Calu3 (cell line): ENCODE measurements at regions of chr5 and their contacts with region 1.

Region 1: DNA sequence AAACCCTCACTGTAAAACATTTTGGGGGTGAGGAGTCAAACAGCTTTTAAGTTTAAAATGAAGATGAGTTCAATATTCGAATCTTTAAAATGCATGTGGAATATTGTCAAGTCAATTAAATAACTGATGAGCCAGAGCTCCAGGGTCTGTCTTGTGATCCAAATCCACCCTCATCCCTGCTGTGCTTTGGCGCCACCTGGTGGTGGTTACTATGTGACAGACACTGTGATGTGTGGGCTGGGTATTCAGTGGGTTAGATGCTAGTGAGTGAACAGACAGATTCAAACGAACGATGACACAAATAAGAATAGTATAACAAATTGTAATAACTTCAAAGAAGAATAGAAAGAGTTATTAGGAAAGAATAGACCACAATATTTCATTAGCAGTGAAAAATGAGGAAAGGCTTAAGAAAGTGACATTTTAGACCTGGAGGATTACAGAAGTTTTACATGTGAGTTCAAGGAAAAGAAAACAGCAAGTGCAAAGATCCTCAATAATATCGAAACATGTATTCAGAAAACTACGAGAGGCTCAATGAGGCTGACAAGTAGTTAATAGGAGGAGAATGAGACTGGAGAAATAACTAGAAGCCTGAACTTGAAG is 51.4 kb upstream of the CHSY3 start:
- DNase-seq: peak; percentile 89
- H3K4me3 Mint-ChIP-seq: no peak overlapping the region
- H3K27ac Mint-ChIP-seq: no peak overlapping the region
- H3K4me1 Mint-ChIP-seq: no peaks in the 10 kb centered on the region
- H3K27me3 Mint-ChIP-seq: no peaks in the 10 kb centered on the region
- CTCF ChIP-seq: peak; percentile 95

Region 2: GRCh38 chr5:129172580-129172979 is 680.3 kb before region 1 on chr5:
- CTCF ChIA-PET with region 1: no interaction called
- intact Hi-C with region 1: loop called (anchors 5 kb)
- DNase-seq: peak; percentile 5
- H3K4me3 Mint-ChIP-seq: no peak overlapping the region
- H3K27ac Mint-ChIP-seq: no peak overlapping the region
- H3K4me1 Mint-ChIP-seq: no peaks in the 10 kb centered on the region
- H3K27me3 Mint-ChIP-seq: no peaks in the 10 kb centered on the region
- CTCF ChIP-seq: no peak

Region 3: GRCh38 chr5:129422946-129423345 is 429.9 kb before region 1 on chr5:
- CTCF ChIA-PET with region 1: no interaction called
- intact Hi-C with region 1: no loop called
- DNase-seq: peak; percentile 6
- H3K4me3 Mint-ChIP-seq: no peak overlapping the region
- H3K27ac Mint-ChIP-seq: no peak overlapping the region
- H3K4me1 Mint-ChIP-seq: no peaks in the 10 kb centered on the region
- H3K27me3 Mint-ChIP-seq: no peaks in the 10 kb centered on the region
- CTCF ChIP-seq: no peak

Region 4: GRCh38 chr5:129664337-129664937 is 188.4 kb before region 1 on chr5:
- CTCF ChIA-PET with region 1: no interaction called
- intact Hi-C with region 1: loop called (anchors 5 kb)
- DNase-seq: peak; percentile 78
- H3K4me3 Mint-ChIP-seq: no peak overlapping the region
- H3K27ac Mint-ChIP-seq: no peak overlapping the region
- H3K4me1 Mint-ChIP-seq: no peaks in the 10 kb centered on the region
- H3K27me3 Mint-ChIP-seq: no peaks in the 10 kb centered on the region
- CTCF ChIP-seq: peak; percentile 78

Region 5: DNA sequence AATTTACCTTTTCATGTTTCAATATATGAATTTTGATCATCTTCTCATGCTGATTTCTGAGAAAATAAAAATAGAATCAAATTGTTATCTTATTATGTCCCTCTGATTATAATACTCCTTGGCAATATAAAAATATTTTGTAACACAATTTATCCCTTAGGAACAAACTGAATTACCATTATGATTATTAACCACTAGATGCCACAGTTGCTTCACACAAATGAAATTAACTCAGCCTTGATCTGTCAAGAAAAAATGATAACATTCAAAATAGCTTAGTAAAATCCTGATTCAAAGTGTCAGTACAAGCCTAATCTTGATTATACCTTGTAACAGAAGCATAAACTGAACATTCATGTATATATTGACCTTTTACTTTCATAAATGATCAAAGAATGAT is 46.6 kb after region 1 on chr5:
- CTCF ChIA-PET with region 1: no interaction called
- intact Hi-C with region 1: no loop called
- DNase-seq: no peak
- H3K4me3 Mint-ChIP-seq: no peak overlapping the region
- H3K27ac Mint-ChIP-seq: no peak overlapping the region
- H3K4me1 Mint-ChIP-seq: peaks cover 9% of the 10 kb centered on the region
- H3K27me3 Mint-ChIP-seq: peaks cover 14% of the 10 kb centered on the region
- CTCF ChIP-seq: no peak